Posterior vena cava (tissue), 2 donors: ENCODE measurements at regions of chr2 and their contacts with region 1.

Region 1: DNA sequence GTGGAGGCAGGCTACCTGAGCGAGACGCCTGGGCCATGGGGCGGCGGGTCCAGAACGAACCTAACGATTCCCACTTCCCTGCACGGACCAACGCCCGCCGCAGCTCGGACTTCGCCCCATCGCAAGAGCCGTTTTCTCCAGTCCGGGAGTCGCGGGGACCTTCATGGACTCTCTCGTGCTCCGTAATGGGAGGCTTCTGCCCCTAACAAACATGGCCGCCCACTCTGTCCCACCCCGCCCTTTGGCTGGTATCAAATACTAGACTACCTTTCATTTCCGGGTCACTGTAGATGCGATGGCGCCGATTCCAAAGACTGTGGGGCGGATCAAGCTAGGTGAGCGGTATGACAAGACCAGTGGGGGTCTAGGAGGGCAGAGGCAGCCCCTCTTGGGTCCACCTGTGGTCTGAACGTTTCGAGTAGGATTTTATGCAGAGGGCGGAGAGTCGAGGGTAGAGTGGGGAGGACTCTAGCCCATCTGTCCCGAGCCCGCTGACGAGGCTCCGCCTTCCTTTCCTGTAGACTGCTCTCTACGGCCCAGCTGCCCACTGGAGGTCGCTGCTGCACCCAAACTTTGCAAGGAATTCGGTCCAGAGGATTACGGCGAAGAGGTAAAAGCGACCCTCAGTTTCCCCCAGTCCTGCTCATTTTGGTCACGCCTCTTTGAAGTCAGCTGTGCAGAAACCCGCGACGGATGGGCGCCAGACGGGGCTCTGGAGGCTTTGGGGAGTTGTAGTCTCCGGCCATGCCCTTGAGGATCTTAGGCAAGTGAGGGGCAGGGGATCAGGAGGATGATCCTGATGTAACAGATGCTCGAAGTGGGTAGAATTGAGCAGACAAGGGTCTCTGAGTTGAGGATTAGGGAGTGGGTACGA is at the starts of genes CCDC142 and TTC31:
- DNase-seq: peak; percentile 99
- total RNA-seq, gene CCDC142: 9.9 to 11.2 TPM
- total RNA-seq, gene TTC31: 13.2 to 15.0 TPM

Region 2: GRCh38 chr2:74587664-74588277 is 104.7 kb after region 1 on chr2:
- intact Hi-C with region 1: loop called (anchors 5 kb)
- DNase-seq: peak; percentile 81